Panc1 (cell line): ENCODE measurements at regions of chr3 and their contacts with region 1.

Region 1: DNA sequence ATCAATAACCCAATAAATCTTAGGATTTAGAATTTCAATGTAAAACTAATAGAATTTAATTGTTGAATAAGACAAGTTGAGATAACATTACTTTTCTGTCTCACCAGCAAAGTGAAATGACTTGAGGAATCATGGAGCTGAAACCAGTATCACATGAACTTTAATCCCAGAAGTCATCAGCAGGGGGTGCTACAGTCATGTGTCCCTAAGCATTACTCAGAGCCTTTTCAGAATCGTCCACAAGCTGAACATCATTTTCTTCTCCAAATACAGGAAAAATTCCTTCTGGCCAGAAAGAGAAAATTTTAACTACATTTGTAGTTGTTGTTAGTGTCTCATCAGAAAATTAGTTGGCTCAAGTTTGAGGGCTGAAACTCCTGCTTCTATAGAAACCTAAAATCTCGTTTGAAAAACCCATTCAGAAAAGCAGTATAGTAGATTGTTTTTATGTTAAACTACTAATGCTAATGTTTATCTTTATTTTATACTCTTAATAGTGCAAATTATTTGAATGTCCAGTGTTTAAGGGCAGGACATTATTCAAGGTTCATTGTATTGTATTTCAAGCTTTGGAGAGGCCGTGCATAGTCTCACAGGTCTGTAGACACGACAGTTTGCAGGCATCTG is 384.1 kb downstream of the PLOD2 start:
- DNase-seq: peak; percentile 28
- ATAC-seq: no peak
- H3K4me3 ChIP-seq: no peak overlapping the region
- H3K27ac ChIP-seq: no peak overlapping the region
- H3K4me1 ChIP-seq: no peaks in the 10 kb centered on the region
- H3K27me3 ChIP-seq: no peaks in the 10 kb centered on the region
- CTCF ChIP-seq: peak; percentile 73; the same call in 1 of the 2 replicates

Region 2: DNA sequence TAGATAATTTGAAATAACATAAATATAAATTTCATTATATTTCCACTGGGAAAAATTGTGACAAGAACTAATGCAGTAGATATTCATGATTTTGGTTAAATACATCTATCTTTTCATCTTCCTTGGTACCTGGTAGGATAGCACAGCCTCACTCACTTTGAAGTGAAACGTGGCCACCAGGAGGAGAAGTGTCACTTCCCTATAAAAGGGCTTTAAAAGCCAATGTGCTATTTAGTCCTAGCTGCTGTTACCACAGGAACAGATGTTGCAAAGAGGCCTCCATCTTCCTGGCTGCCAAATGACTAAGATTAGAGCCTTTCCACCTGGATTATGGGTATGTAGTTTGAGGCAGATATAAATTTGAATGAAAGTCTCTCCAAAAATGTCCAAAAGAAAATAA is 244.1 kb after region 1 on chr3:
- CTCF ChIA-PET with region 1: no interaction called
- POLR2A ChIA-PET with region 1: no interaction called
- in situ Hi-C with region 1: no loop called
- intact Hi-C with region 1: loop called (anchors 10 kb)
- DNase-seq: no peak
- ATAC-seq: no peak
- H3K4me3 ChIP-seq: no peak overlapping the region
- H3K27ac ChIP-seq: no peak overlapping the region
- H3K4me1 ChIP-seq: no peaks in the 10 kb centered on the region
- H3K27me3 ChIP-seq: no peaks in the 10 kb centered on the region
- CTCF ChIP-seq: peak; percentile 15; the same call in 1 of the 2 replicates